Posterior vena cava (tissue), 2 donors: ENCODE measurements at regions of chr20 and their contacts with region 1.

Region 1: GRCh38 chr20:18922898-18923297 is 109.3 kb downstream of the SCP2D1 start:
- DNase-seq: no peak

Region 2: GRCh38 chr20:18857640-18858039 is 65.3 kb before region 1 on chr20:
- intact Hi-C with region 1: loop called in 1 of 2 experiments (anchors 2 kb)
- DNase-seq: no peak